Transverse colon (tissue), 4 donors: ENCODE measurements at regions of chr11 and their contacts with region 1.

Region 1: DNA sequence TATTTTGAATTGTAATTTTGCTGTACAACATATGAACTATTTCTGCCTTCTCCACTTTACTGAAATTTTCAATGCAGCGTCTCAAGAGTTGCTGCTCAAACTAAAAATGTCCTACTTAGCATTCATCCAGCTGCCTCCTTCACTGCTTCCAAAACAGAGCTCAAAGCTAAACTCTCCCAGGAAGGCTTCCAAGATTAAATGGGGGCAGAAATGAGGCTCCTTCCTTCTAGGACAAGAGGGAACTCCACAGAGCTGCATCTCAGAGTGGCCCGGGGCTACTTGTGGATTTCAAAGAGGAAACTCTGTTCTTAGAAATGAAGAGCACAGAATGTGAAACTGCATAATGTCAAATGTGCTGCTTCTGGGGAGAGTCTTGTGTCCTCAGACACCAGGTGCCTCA is 295.9 kb upstream of the NCAM1 start:
- DNase-seq: no peak
- H3K4me3 ChIP-seq: no peak overlapping the region
- H3K27ac ChIP-seq: no peak overlapping the region
- H3K4me1 ChIP-seq: no peaks in the 10 kb centered on the region
- H3K27me3 ChIP-seq: no peaks in the 10 kb centered on the region
- CTCF ChIP-seq: no peak
- EP300 ChIP-seq: no peak
- POLR2A ChIP-seq: no peak

Region 2: DNA sequence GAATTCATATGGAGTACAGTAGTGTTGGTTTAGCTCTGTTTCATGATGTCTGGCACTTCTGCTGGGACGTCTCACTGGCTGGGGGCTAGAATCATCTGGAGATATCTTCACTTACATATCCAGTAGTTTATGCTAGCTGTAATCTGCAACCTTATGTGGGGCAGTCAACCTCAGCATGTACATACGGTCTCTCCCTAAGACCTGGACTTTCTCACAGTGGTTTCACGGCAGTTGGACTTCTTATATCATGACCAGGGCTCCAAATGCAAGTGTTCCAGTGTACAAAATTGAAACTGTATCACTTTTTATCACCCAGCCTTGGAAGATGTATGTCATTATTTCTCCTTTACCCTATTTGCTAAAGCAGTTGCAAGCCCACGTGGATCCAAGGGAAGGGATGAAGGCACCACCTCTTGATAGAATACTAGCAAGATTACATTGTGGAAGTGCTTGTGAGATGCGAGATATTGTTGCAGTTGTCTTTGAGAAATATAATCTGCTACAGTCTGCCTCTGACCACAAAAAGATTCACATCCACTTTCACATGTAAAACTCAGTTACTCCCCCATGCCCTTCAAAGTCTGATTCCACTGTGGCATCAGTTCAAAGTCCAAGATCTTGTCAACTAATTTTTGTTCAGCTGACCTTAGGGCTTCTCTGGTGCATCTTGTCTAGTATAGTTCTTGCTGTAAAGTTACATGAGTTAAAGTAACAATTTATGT is 20.7 kb before region 1 on chr11:
- in situ Hi-C with region 1: no loop called
- intact Hi-C with region 1: loop called (anchors 2 kb)
- DNase-seq: no peak
- H3K4me3 ChIP-seq: no peak overlapping the region
- H3K27ac ChIP-seq: no peak overlapping the region
- H3K4me1 ChIP-seq: no peaks in the 10 kb centered on the region
- H3K27me3 ChIP-seq: no peaks in the 10 kb centered on the region
- CTCF ChIP-seq: no peak
- EP300 ChIP-seq: no peak
- POLR2A ChIP-seq: no peak